ENCODE measurements at regions of chr11 and their contacts with region 1.

Region 1: DNA sequence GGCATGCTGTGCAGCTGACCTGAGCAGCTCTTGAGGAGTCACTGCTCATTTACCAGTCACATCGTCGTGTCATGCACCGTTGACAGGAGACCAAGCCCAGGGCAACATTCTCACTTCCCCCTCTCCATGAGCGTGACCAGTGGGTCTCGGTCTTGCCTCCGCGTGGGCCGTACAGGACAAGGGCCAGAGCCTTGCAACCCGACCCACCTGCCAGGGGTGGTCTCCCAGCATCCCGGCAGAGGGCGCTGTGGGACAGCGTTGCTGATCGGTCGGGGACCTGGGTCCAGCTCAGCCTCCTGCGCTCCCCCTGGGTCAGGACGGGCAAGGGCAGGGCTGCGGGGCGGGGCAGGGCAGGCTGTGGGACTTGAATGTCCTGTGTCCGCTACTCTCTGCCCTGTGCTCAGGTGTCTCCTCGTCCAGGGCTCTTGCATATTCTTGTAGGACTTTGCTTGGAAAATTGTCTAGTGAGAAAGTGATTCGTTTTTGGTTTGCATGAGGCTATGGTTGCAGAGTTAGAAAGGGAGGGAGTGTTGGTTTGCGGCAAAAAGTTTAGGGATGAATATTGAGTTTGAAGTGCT is 16.2 kb downstream of the EIF4G2 start:
- DNase-seq: peak; percentile 19
- ATAC-seq: peak; percentile 97
- H3K4me3 ChIP-seq: no peak overlapping the region
- H3K27ac ChIP-seq: no peak overlapping the region
- H3K4me1 ChIP-seq: peaks cover 4% of the 10 kb centered on the region
- H3K27me3 ChIP-seq: no peaks in the 10 kb centered on the region
- CTCF ChIP-seq: peak; percentile 95 to 97 (median 97)
- EP300 ChIP-seq: no peak
- POLR2A ChIP-seq: no peak
- RAD21 ChIP-seq: peak; percentile 96

Region 2: DNA sequence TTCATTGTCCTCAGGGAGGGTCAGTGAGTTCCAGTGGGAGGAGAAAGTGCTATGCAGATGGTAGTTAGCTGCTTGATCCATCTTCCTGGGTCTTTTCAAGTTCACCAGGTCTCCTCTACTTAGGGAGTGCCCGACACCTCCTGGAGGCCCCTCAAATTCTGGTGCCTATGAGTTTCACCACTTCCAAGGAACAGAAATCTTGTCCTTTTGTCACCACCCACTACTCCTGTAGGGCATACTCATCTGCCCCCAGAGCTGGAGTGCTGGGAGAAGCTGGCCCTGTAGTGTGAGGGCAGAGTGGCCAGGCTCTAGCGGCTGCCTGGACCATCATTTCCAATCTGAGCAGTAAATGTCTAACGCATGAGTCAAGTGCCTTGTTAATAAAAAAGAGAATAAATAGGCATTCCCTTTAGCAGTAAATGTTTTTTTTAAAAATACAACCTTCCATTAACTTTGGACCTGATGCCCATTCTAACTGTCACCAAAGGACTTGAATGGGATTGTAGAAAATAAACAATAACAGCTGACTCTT is 111.5 kb before region 1 on chr11:
- CTCF ChIA-PET with region 1: no interaction called
- POLR2A ChIA-PET with region 1: no interaction called
- RAD21 ChIA-PET with region 1: no interaction called
- SMC1A ChIA-PET with region 1: no interaction called
- in situ Hi-C with region 1: no loop called
- intact Hi-C with region 1: no loop called
- DNase-seq: no peak
- ATAC-seq: no peak
- H3K4me3 ChIP-seq: no peak overlapping the region
- H3K27ac ChIP-seq: no peak overlapping the region
- H3K4me1 ChIP-seq: no peaks in the 10 kb centered on the region
- H3K27me3 ChIP-seq: no peaks in the 10 kb centered on the region; a peak in 2 of 4 replicates
- CTCF ChIP-seq: no peak
- EP300 ChIP-seq: no peak
- POLR2A ChIP-seq: no peak
- RAD21 ChIP-seq: no peak

Region 3: DNA sequence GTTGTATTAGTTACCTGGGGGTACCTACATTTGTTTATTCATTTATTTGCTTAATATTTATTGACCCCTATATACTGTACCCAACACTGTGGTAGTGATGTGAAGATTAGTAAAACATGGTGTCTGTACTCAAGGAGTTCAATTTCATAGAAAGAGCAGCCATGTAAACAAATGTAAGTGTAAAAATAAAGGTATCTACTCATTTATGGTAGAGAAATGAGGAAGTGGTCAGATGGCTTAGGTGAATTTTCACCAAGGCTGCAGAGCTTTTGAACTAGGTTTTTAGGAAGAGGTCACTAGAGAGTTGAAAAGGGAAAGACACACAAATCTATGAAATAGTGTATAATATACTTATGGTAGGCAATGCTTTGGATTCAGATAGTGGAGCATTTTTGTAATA is 30.3 kb before region 1 on chr11:
- CTCF ChIA-PET with region 1: interaction called, 16 read pairs
- POLR2A ChIA-PET with region 1: no interaction called
- RAD21 ChIA-PET with region 1: interaction called, 4 read pairs
- SMC1A ChIA-PET with region 1: interaction called, 8 read pairs
- in situ Hi-C with region 1: no loop called
- intact Hi-C with region 1: no loop called
- DNase-seq: peak; percentile 60
- ATAC-seq: peak; percentile 97
- H3K4me3 ChIP-seq: no peak overlapping the region
- H3K27ac ChIP-seq: peak overlapping the region; percentile 67
- H3K4me1 ChIP-seq: peaks cover 11% of the 10 kb centered on the region
- H3K27me3 ChIP-seq: no peaks in the 10 kb centered on the region
- CTCF ChIP-seq: peak in 1 of 3 experiments; percentile 11; a peak in 2 of 6 replicates
- EP300 ChIP-seq: peak; percentile 51 to 72; a peak in 2 of 4 replicates
- POLR2A ChIP-seq: no peak
- RAD21 ChIP-seq: no peak

Region 4: DNA sequence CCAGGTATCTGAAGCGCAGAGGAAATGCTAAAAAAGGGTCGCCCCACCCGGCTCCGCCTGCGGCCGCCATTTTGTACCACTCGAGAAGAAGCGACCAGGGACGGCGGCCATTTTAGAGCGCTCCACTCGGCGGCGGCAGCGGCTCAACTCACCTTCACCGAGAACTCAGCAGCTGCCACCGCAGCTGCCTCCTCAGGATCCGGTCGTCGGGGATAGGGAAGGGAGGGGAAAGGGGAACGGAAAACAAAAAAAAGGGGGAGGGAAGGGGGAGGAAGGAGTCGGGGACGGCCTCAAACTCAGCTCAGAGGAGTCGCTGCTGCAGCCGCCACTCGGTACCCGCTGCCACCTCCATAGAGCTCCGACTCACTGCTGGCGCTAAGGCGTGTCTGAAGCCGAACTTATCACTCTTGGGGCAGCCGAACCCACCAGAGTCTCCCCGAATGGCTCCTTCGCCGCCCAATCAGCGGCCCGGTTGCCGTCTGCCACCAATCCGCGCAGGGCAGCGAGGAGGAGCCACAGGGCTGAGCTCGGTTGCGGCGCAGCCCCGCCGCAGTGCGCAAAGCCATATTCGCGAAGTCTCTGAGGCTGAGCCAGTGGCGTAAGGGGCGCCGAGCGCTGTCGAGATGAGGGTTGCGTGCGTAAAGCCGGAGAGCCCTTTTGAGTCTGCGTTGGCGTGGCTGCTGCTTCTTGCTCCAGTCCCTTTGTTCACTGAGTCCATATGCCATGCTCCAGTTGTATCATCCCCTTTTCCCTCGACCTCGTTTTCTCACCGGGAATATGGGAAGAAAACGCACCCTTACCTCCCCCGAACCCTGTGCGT is 16.3 kb after region 1 on chr11 and contains the start of gene EIF4G2:
- CTCF ChIA-PET with region 1: interaction called, 61 read pairs
- POLR2A ChIA-PET with region 1: interaction called, 13 read pairs
- RAD21 ChIA-PET with region 1: interaction called, 20 read pairs
- SMC1A ChIA-PET with region 1: interaction called, 14 read pairs
- in situ Hi-C with region 1: no loop called
- intact Hi-C with region 1: no loop called
- DNase-seq: peak; percentile 95
- ATAC-seq: peak; percentile 96
- H3K4me3 ChIP-seq: peak within 1 kb of the TSS; percentile 88
- H3K27ac ChIP-seq: peak within 1 kb of the TSS; percentile 98
- H3K4me1 ChIP-seq: peaks cover 10% of the 10 kb centered on the region; the same call in 1 of the 2 replicates
- H3K27me3 ChIP-seq: no peaks in the 10 kb centered on the region
- CTCF ChIP-seq: no peak
- EP300 ChIP-seq: no peak
- POLR2A ChIP-seq: peak; percentile 98
- RAD21 ChIP-seq: no peak
- polyA plus RNA-seq, gene EIF4G2: 210 to 317 TPM

Region 5: DNA sequence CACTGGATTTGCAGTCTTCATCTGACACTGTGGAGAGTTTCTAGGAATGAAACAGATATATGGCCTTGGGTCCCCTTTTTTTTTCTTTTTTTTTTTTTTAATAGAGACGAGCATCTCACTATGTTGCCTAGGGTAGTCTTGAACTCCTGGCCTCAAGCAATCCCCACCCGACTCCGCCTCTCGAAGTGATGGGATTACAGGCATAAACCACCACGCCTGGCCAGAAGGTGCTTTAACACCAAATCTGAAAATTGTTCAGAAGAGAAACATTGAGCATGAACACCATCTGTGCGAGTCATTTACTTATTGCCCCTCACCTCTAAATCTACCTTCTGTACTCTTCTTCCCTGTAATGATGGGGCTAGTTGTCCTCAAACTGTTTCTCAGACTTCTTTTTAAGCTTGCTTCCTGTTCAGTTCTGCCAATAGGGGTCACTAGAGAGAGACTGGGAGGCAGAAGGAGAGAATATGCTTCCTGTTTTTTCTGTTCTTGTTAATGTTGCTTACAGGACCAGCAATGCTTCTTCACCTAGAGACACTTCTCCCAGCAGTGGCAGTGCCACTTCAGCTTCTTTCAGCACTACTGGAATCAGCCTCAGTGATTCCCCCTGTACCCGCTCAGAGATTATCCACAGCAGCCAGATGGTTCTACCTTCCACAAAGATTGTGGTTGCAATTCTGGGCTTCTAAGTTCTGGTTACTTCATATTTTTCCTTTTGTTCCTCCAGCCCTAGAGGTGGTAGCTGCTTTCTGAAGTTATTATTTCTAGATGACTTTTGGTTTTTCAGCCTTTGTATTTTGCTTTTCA is 86.1 kb after region 1 on chr11:
- CTCF ChIA-PET with region 1: interaction called, 8 read pairs
- POLR2A ChIA-PET with region 1: no interaction called
- RAD21 ChIA-PET with region 1: interaction called, 3 read pairs
- SMC1A ChIA-PET with region 1: interaction called, 13 read pairs
- in situ Hi-C with region 1: no loop called
- intact Hi-C with region 1: no loop called
- DNase-seq: peak; percentile 19
- ATAC-seq: peak; percentile 80
- H3K4me3 ChIP-seq: no peak overlapping the region
- H3K27ac ChIP-seq: no peak overlapping the region
- H3K4me1 ChIP-seq: no peaks in the 10 kb centered on the region
- H3K27me3 ChIP-seq: no peaks in the 10 kb centered on the region
- CTCF ChIP-seq: peak; percentile 42 to 71 (median 64)
- EP300 ChIP-seq: no peak
- POLR2A ChIP-seq: no peak
- RAD21 ChIP-seq: no peak

Region 6: DNA sequence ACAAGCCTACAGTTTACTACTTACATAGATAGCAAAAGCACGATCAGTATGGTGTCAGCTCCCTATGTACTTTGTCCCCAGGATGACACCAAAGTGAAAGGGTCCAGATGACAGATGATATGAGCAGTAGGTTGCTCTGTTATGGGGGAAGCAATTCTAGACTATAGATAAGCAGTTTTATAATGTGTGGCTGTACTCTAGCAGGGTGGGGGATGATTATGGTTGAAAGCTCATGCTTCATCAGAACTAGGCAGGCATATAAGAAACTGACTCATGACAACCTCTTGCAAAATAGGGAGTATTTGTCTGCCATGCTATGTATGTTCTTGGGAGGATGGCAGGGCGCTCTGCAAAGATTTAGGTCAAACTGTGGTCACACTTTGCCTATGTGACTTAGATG is 223.6 kb after region 1 on chr11:
- CTCF ChIA-PET with region 1: interaction called, 46 read pairs
- POLR2A ChIA-PET with region 1: no interaction called
- RAD21 ChIA-PET with region 1: interaction called, 26 read pairs
- SMC1A ChIA-PET with region 1: interaction called, 9 read pairs
- in situ Hi-C with region 1: loop called (anchors 5 kb)
- intact Hi-C with region 1: no loop called
- DNase-seq: no peak
- ATAC-seq: no peak
- H3K4me3 ChIP-seq: no peak overlapping the region
- H3K27ac ChIP-seq: no peak overlapping the region
- H3K4me1 ChIP-seq: no peaks in the 10 kb centered on the region
- H3K27me3 ChIP-seq: peaks cover 0 to 6% of the 10 kb centered on the region in 2 experiments; a peak in 2 of 4 replicates
- CTCF ChIP-seq: no peak
- EP300 ChIP-seq: no peak
- POLR2A ChIP-seq: no peak
- RAD21 ChIP-seq: no peak

Region 7: GRCh38 chr11:11787305-11788062 is 995.0 kb after region 1 on chr11:
- CTCF ChIA-PET with region 1: no interaction called
- POLR2A ChIA-PET with region 1: no interaction called
- RAD21 ChIA-PET with region 1: interaction called, 7 read pairs
- SMC1A ChIA-PET with region 1: interaction called, 8 read pairs
- in situ Hi-C with region 1: loop called (anchors 5 kb)
- intact Hi-C with region 1: loop called (anchors 5 kb)
- DNase-seq: peak; percentile 23
- ATAC-seq: peak; percentile 98
- H3K4me3 ChIP-seq: no peak overlapping the region
- H3K27ac ChIP-seq: no peak overlapping the region
- H3K4me1 ChIP-seq: no peaks in the 10 kb centered on the region
- H3K27me3 ChIP-seq: no peaks in the 10 kb centered on the region; a peak in 1 of 4 replicates
- CTCF ChIP-seq: peak; percentile 68 to 86 (median 81)
- EP300 ChIP-seq: no peak
- POLR2A ChIP-seq: no peak
- RAD21 ChIP-seq: peak; percentile 95

Measured in GM12878 (cell line).